ENCODE measurements at regions of chr1 and their contacts with region 1.

Region 1: GRCh38 chr1:219279017-219279770 is 105.5 kb downstream of the LYPLAL1 start:
- DNase-seq: peak; percentile 87
- H3K4me3 ChIP-seq: no peak overlapping the region
- H3K27ac ChIP-seq: peak overlapping the region; percentile 64
- H3K4me1 ChIP-seq: peaks cover 28% of the 10 kb centered on the region
- H3K27me3 ChIP-seq: no peaks in the 10 kb centered on the region
- CTCF ChIP-seq: no peak
- POLR2A ChIP-seq: no peak

Region 2: GRCh38 chr1:219298571-219299148 is 19.5 kb after region 1 on chr1:
- CTCF ChIA-PET with region 1: no interaction called
- POLR2A ChIA-PET with region 1: interaction called, 5 read pairs
- dilution Hi-C with region 1: no loop called
- intact Hi-C with region 1: loop called (anchors 1 kb)
- DNase-seq: peak; percentile 71
- H3K4me3 ChIP-seq: no peak overlapping the region
- H3K27ac ChIP-seq: peak overlapping the region; percentile 51
- H3K4me1 ChIP-seq: peaks cover 35% of the 10 kb centered on the region
- H3K27me3 ChIP-seq: no peaks in the 10 kb centered on the region
- CTCF ChIP-seq: no peak
- POLR2A ChIP-seq: no peak

Region 3: GRCh38 chr1:219310181-219310728 is 31.1 kb after region 1 on chr1:
- CTCF ChIA-PET with region 1: no interaction called
- POLR2A ChIA-PET with region 1: no interaction called
- dilution Hi-C with region 1: no loop called
- intact Hi-C with region 1: no loop called
- DNase-seq: peak; percentile 55
- H3K4me3 ChIP-seq: no peak overlapping the region
- H3K27ac ChIP-seq: peak overlapping the region; percentile 4
- H3K4me1 ChIP-seq: peaks cover 20% of the 10 kb centered on the region
- H3K27me3 ChIP-seq: no peaks in the 10 kb centered on the region
- CTCF ChIP-seq: no peak
- POLR2A ChIP-seq: no peak

Region 4: GRCh38 chr1:219324629-219325367 is 45.6 kb after region 1 on chr1:
- CTCF ChIA-PET with region 1: no interaction called
- POLR2A ChIA-PET with region 1: interaction called, 4 read pairs
- dilution Hi-C with region 1: no loop called
- intact Hi-C with region 1: loop called (anchors 1 kb)
- DNase-seq: peak; percentile 83
- H3K4me3 ChIP-seq: no peak overlapping the region
- H3K27ac ChIP-seq: peak overlapping the region; percentile 78
- H3K4me1 ChIP-seq: peaks cover 44% of the 10 kb centered on the region
- H3K27me3 ChIP-seq: no peaks in the 10 kb centered on the region
- CTCF ChIP-seq: no peak
- POLR2A ChIP-seq: peak; percentile 63